Sciatic nerve (tissue), 2 donors: ENCODE measurements at regions of chr3 and their contacts with region 1.

Region 1: GRCh38 chr3:84194029-84194428 is 764.8 kb upstream of the CADM2 start:
- DNase-seq: no peak
- ATAC-seq: no peak

Region 2: DNA sequence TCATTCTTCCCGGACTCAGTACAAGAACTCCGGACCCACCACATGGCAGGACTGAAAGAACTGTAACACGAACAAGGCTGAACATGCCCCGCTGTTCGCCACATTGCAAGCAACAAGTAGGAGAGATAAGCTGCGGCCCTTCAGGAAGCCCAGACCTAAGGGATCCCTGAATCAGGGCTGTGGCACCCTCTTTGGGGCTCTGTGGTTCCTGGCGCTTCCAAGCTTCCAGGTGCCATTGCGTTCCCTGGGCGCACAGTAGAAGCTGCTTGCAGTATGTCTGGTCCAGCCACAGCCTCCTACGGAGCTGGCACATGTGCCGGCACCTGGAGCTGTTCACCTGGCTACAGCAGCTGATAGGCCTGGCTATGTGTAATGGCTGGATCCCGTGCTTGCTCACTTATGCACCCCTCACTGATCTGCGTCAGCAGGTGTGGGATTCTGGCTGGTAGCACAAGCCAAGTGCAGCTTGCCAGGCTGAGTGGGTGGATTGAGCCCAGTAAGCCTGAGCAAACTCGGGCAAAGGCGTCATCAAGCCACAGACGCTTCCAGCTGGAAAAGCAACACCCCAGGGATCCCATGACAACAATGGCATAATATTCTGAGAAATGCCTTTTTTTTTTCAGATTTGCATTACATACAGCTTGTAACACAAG is 1684.0 kb before region 1 on chr3:
- intact Hi-C with region 1: no loop called
- DNase-seq: no peak
- ATAC-seq: no peak

Region 3: GRCh38 chr3:84136425-84136824 is 57.6 kb before region 1 on chr3:
- intact Hi-C with region 1: no loop called
- DNase-seq: no peak
- ATAC-seq: no peak

Region 4: DNA sequence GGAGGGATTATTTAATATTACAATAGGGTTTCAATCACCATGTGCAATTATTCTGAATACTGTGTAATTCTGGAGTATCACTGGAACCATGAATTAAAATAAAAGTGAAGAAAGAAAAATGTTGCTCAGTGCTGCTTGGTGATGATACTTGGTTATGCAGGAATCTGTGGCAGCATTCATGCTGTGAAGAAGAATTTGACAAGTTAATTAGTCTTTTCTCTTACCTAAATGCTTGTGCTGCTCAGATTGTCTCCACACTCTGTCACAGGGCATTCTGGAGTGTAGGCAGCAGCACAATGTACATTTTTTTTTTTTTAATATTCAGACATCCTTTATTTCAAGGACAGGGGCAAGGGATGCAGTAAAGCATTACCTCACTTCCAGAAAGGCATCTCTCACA is 15.4 kb after region 1 on chr3:
- intact Hi-C with region 1: loop called (anchors 1 kb)
- DNase-seq: no peak
- ATAC-seq: no peak

Region 5: GRCh38 chr3:84224262-84224661 is 30.2 kb after region 1 on chr3:
- intact Hi-C with region 1: loop called (anchors 1 kb)
- DNase-seq: no peak
- ATAC-seq: no peak